ENCODE measurements at regions of chr12 and their contacts with region 1.

Region 1: GRCh38 chr12:42325653-42326474 is at the starts of genes PPHLN1 and ZCRB1:
- DNase-seq: peak; percentile 64 to 95 (median 87)

Region 2: DNA sequence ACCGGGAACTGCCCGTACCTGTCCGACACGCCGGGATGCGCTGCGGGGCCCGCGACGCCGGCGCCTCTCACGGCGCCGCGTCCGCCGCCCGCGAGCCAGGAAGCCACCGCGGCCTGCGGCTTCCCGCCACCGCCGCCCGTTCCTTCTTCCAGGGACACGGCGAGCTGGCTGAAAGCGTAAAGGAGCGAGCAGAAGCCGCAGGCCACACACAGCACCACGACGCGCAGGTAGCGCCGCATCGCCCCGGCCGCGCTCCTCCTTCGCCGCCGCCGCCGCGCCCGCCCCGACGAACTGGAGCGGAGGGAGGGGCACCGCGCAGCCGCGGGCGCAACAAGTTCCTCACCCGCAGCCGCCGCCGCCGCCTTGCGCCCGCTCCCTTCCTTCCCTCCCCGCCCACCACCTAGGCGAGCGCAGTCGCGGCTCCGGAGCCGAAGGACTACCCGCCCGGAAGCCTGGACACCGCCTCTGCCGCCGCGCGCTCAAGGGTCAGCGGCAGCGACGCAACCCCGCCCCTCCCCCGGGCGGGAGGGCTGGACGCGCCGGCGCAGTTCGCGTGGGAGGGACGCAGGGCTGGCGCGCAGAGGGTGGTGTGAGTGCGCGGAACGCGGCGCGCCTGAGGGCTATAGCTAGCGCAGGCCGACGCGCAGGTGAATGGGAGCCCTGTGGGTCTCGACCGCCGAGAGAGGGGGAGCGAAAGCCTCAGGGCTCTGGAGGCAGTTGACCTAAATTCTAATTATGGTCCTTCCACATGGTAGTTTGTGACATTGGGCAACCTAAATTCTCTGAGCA is 181.3 kb before region 1 on chr12 and contains the start of gene GXYLT1:
- intact Hi-C with region 1: loop called (anchors 5 kb)
- DNase-seq: peak; percentile 46 to 94 (median 87)

Measured in head of caudate nucleus (tissue), 42 donors.